ENCODE measurements at regions of chr22 and their contacts with region 1.

Region 1: DNA sequence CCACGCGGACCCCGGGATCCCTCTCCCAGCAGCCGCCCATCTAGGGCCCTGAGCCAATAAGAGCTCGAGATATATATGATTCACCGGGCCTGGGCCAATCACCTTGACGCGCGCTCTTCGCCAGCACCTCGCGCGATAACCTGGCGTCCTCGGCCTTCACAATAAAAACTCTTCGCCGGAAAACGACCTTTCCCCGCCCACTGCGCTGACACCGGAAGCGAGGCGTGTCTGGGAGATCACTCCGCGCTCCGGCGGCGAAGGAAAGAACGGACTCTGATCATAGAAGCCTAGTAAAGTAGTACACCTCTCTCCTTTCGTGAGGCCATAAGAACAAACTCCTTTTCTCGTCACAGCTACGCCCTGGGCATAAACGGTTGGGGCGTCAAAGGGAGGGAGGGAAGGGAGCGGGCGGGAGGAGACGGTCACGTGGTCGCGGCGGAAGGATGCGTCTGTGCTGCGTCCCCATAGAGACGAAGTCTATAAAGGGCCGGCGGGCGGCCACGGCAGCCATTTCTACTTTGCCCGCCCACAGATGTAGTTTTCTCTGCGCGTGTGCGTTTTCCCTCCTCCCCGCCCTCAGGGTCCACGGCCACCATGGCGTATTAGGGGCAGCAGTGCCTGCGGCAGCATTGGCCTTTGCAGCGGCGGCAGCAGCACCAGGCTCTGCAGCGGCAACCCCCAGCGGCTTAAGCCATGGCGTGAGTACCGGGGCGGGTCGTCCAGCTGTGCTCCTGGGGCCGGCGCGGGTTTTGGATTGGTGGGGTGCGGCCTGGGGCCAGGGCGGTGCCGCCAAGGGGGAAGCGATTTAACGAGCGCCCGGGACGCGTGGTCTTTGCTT is at the start of gene ATF4:
- DNase-seq: peak; percentile 99
- H3K4me3 ChIP-seq: peak within 1 kb of the TSS; percentile 95 to 99
- H3K27ac ChIP-seq: peak within 1 kb of the TSS; percentile 98 to 99
- H3K4me1 ChIP-seq: peaks cover 47% of the 10 kb centered on the region
- H3K27me3 ChIP-seq: no peaks in the 10 kb centered on the region
- CTCF ChIP-seq: peak in 1 of 3 experiments; percentile 3
- POLR2A ChIP-seq: peak; percentile 77
- total RNA-seq, gene ATF4: 192 to 228 TPM

Region 2: DNA sequence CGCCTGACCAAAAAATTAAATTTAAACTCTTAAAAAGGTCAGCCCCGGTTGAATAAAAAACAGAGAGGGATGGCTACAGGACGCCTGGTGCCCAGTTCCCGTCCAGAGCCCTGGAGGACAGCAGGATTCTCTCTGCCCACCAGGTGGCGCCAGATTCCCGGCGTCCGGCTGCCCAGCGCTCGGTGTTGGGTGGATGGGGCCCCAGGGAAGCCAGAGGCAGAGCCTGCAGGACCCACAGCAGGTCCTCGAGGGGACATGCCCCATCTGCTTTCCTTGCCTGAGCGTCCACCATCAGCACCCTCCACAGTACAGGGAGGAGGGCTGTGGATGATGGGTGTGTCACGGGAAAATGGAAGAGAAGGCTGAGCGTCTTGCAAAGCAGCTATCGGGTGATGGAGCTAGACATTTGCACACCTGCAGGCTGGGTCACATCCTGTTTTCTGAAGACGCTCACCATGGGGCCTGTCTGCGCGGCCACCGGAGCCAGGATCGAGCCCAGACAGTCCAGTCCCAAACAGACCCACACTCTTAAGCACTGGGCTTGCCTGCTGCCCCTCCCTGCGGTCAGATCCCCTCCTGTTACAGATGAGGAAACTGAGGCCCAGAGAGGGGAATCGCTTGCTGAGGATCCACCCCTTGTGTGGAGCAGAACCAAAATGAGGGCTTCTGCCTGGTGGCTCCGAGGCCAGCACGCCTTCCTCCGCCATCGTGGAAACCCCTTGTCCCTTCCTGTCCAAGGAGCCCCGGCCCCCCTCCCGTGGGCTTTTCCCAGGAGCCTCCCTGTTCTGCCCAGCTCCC is 349.2 kb before region 1 on chr22:
- intact Hi-C with region 1: loop called (anchors 10 kb)
- DNase-seq: peak; percentile 87
- H3K4me3 ChIP-seq: no peak overlapping the region
- H3K27ac ChIP-seq: no peak overlapping the region
- H3K4me1 ChIP-seq: peaks cover 28% of the 10 kb centered on the region
- H3K27me3 ChIP-seq: no peaks in the 10 kb centered on the region
- CTCF ChIP-seq: peak; percentile 98
- POLR2A ChIP-seq: no peak

Region 3: GRCh38 chr22:39319270-39320022 is 200.8 kb before region 1 on chr22 and contains the start of gene RPL3:
- intact Hi-C with region 1: loop called (anchors 10 kb)
- DNase-seq: peak; percentile 98
- H3K4me3 ChIP-seq: peak within 1 kb of the TSS; percentile 68 to 88
- H3K27ac ChIP-seq: peak within 1 kb of the TSS; percentile 95 to 99
- H3K4me1 ChIP-seq: peaks cover 36% of the 10 kb centered on the region
- H3K27me3 ChIP-seq: no peaks in the 10 kb centered on the region
- CTCF ChIP-seq: peak in 2 of 3 experiments; percentile 38 to 41
- POLR2A ChIP-seq: peak; percentile 15
- total RNA-seq, gene RPL3: 1,087 to 2,075 TPM

Region 4: DNA sequence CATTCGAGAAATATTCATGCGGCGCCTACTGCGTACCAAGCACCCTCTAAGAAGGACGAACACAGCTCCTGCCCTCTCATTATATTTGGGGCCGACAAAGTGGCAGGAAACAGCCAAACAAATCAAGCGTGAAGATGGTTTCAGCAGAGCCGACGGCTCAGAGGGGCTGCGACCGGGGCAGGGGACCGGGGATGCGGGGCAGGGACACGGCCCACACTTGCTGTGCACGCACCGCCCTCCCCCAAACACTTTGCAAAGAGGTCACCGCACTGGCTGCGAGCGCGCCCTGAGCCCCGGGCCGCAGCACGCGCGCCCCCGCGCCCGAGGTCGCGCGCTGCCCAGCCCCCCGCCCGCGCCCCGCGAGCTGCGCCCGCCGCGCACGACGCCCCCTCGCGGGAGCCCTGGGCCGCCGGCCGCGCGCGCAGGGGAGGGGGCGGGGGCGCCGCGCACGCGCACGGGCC is 170.7 kb before region 1 on chr22:
- intact Hi-C with region 1: no loop called
- DNase-seq: peak; percentile 57
- H3K4me3 ChIP-seq: peak overlapping the region; percentile 81 to 84
- H3K27ac ChIP-seq: peak overlapping the region; percentile 53 to 85
- H3K4me1 ChIP-seq: peaks cover 22% of the 10 kb centered on the region
- H3K27me3 ChIP-seq: no peaks in the 10 kb centered on the region
- CTCF ChIP-seq: no peak
- POLR2A ChIP-seq: no peak

Region 5: DNA sequence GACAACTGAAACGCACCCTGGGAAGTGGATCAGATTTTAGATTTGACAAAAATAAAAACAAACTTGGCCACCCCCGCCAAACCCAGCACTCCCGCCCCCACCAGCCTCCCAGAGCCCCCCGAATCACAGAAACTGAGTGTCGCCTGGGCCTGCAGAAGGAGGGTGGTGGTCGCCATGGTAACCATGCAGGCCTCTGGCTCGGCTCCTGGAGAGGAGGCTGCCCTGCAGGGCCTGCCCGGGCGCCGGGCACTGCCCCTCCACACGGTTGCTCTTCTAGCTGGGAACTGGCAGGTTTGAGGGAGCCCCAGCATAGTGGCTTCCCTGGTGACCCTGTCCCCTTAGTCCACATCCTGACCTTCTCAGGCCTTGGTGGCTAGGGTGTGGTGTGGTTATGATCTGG is 69.6 kb after region 1 on chr22:
- intact Hi-C with region 1: no loop called
- DNase-seq: no peak
- H3K4me3 ChIP-seq: no peak overlapping the region
- H3K27ac ChIP-seq: no peak overlapping the region
- H3K4me1 ChIP-seq: peaks cover 13% of the 10 kb centered on the region
- H3K27me3 ChIP-seq: no peaks in the 10 kb centered on the region
- CTCF ChIP-seq: no peak
- POLR2A ChIP-seq: no peak